Dendritic cell treated with granulocyte-macrophage colony-stimulating factor and Interleukin-4, amounts not matched to agents 40 ng/mL and 50 ng/mL, for 4 days (primary cell): ENCODE measurements at regions of chr5 and their contacts with region 1.

Region 1: DNA sequence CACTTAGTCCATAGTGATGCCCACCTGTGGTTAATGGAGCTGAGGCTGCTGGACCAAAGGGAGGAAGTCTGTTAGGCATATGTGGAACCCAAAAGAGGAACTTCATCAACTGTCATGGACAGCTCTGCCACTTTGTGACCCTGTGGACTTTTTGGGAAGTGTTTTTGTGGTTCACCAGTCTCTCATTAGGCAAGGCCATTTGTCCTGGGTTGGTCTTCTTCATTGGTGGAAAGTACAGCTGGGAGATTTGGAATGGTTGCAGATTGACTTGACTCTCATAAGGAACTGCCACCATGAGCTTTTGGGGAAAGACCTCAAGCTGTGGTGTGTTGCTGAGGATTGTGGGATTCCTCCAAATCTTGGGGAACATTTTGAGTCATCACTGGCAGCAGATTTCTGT is 31.9 kb upstream of the IL12B start:
- H3K4me3 Mint-ChIP-seq: no peak overlapping the region
- H3K27ac Mint-ChIP-seq: peak overlapping the region; percentile 55
- H3K4me1 Mint-ChIP-seq: peaks cover 11% of the 10 kb centered on the region
- H3K27me3 Mint-ChIP-seq: peaks cover 16% of the 10 kb centered on the region

Region 2: DNA sequence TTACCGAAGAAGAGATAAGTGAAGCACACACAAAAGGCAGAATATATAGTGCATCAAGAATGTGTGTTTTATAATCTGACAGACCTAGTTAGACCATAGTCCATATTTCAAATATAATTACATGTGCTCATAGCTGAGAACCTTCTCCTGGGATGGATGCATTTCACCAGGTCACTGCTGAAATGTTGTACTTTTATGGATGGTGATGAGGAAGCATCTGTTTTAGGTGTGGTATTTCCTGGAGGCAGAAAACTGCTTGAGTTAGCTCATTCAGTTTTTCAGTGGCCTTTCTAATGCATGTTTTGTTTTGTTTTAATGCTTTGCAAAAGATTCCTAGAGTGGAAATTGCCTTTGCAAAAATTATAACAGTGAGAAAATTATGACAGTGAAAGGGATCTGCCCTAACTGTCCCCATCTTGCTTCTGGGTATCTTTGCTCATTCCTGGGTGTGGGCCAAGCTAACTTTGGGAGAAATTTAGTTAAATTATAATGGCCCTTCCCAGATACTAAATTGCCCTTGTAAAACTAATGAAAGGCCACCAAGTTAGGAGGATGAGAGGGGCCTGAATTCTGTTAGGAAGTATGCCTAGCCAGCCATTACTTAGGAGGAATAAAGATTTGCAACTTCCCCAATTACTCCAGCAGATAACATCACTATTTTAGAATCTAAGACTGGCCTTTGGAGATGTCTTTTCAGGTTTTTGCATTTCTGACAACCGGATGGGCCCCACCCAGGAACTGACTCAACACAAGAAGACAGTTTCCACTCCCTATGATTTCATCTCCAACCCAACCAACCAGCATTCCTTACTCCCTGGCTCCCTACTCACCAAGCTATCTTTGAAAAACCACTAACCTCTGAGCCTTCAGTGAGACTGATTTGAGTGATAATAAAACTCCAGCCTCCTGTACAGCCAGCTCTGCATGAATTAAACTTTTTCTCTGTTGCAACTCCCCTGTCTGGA is 24.9 kb before region 1 on chr5:
- intact Hi-C with region 1: loop called (anchors 2 kb)
- H3K4me3 Mint-ChIP-seq: no peak overlapping the region
- H3K27ac Mint-ChIP-seq: peak overlapping the region; percentile 84
- H3K4me1 Mint-ChIP-seq: peaks cover 44% of the 10 kb centered on the region
- H3K27me3 Mint-ChIP-seq: peaks cover 1% of the 10 kb centered on the region

Region 3: GRCh38 chr5:159456722-159457465 is 94.7 kb after region 1 on chr5:
- intact Hi-C with region 1: loop called (anchors 10 kb)
- H3K4me3 Mint-ChIP-seq: no peak overlapping the region
- H3K27ac Mint-ChIP-seq: no peak overlapping the region
- H3K4me1 Mint-ChIP-seq: peaks cover 38% of the 10 kb centered on the region
- H3K27me3 Mint-ChIP-seq: peaks cover 27% of the 10 kb centered on the region